GM12878 (cell line): ENCODE measurements at regions of chr16 and their contacts with region 1.

Region 1: DNA sequence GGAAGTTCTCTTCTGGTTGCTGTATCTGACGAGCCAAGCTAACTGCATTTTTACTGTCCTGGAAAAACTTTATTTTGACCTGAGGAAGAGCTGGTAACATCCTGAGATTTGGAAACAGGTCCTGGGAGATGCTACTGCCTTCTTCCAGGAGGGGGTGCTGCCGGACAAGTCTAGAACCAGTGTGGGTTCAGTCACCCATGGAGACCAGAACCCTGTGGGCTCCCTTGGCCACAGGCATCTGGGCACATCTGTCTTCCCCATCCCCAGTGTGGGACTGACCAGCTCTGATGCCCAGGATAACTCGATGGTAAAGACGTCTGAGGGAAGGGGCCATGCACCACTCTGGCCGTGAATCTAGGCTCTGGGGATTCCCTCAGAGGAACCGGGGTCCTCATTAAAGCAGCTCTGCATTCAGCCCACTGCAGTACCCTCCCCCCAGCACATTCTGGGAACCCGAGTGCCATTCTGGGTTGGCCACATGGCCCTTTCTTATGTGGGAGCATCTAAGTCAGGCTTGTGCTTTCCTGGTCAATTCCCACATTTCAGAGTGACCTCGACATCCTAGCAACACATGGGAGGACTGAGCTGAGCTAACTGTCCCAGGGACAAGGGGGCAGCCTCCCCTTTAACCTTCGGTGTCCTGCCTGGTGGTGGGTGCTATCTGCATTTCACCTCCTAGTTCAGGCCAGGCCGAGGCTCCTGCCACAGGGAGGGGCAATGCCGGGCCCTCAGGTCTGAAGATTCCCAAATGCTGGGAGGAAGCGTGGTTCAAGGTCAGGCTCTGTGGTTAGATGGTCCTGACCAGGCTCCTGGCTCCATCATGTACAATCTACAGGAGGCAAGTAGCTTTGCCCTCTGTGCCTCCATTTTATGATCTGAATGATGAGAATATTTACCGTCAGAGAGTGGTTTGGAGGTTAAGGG is 6.4 kb downstream of the C16orf86 start:
- DNase-seq: no peak
- ATAC-seq: peak; percentile 59
- H3K4me3 ChIP-seq: no peak overlapping the region
- H3K27ac ChIP-seq: no peak overlapping the region
- H3K4me1 ChIP-seq: peaks cover 24% of the 10 kb centered on the region
- H3K27me3 ChIP-seq: no peaks in the 10 kb centered on the region
- CTCF ChIP-seq: peak; percentile 83 to 94 (median 88)
- EP300 ChIP-seq: no peak
- POLR2A ChIP-seq: no peak
- RAD21 ChIP-seq: peak; percentile 94

Region 2: DNA sequence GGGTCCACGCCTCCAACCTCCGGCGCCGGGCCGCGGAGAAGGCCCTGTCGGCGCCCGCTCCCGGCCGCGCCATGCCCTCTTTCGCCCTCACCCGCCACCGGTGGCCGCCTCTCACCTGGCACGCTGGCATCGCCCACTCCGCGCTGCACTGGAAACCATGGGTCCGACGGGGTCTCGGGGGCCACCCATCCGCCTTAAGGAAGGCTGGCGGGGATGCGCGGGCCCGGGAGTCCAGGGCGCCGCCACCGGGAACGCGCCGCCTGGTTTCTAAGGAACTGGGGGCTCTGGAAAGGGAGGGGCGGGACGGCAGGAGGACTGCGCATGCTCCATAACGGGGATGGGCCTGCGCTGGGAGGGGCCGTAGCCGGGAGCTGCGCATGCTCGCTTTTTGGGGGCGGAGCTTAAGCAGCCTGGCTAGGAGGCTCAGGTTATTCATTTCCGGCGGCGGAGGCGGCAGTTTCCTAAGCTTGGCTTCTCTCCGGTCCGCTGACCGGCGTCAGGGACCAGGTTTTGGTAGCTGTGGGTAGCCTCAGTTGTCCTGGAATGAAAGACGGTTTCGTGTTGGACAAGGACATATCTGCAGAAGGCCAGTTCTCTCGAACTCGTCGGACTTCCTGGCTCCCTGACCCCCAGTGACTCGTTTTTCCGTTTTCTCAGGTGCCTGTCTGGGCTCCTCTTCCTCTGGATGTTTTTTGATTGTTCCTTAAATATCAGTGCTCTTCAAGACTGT is 46.2 kb after region 1 on chr16 and contains the start of gene GFOD2:
- CTCF ChIA-PET with region 1: interaction called, 27 read pairs
- POLR2A ChIA-PET with region 1: interaction called, 4 read pairs
- RAD21 ChIA-PET with region 1: interaction called, 5 read pairs
- SMC1A ChIA-PET with region 1: interaction called, 5 read pairs
- in situ Hi-C with region 1: no loop called
- intact Hi-C with region 1: loop called (anchors 5 kb)
- DNase-seq: peak; percentile 79
- ATAC-seq: peak; percentile 92
- H3K4me3 ChIP-seq: peak within 1 kb of the TSS; percentile 82
- H3K27ac ChIP-seq: peak within 1 kb of the TSS; percentile 95
- H3K4me1 ChIP-seq: peaks cover 11% of the 10 kb centered on the region
- H3K27me3 ChIP-seq: no peaks in the 10 kb centered on the region
- CTCF ChIP-seq: no peak
- EP300 ChIP-seq: no peak
- POLR2A ChIP-seq: peak; percentile 95
- RAD21 ChIP-seq: no peak
- polyA plus RNA-seq, gene GFOD2: 2.0 to 2.2 TPM

Region 3: DNA sequence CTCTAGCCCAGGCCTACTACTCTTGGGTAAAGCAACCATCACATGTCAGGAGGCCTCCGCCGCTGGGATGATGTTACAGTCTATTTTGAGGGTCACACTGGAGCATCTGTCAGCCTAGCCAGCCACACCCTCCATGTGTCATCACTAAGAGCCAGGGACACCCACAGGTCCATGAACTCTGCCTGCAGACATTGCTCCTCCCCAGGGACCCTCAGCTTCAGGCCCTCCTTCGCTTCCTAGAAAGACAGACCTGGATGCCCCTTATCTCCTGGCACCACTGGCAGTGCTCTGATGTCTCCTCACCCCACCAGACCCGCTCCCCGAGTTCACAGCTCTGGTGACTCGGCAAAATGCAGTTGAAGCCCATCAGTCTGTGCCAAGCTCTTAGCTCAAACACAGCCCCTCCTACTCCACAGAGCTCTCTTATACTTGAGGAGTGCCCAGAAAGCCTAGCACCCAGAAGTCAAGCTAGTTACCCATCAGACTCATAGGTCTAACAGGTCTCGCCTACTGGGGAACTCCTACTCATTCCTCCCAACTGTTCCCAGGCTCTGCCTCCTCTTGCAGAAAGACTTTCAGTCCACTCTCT is 127.4 kb after region 1 on chr16:
- CTCF ChIA-PET with region 1: interaction called, 19 read pairs
- POLR2A ChIA-PET with region 1: no interaction called
- RAD21 ChIA-PET with region 1: interaction called, 7 read pairs
- SMC1A ChIA-PET with region 1: interaction called, 8 read pairs
- in situ Hi-C with region 1: no loop called
- intact Hi-C with region 1: no loop called
- DNase-seq: no peak
- ATAC-seq: no peak
- H3K4me3 ChIP-seq: no peak overlapping the region
- H3K27ac ChIP-seq: no peak overlapping the region
- H3K4me1 ChIP-seq: peaks cover 26% of the 10 kb centered on the region
- H3K27me3 ChIP-seq: no peaks in the 10 kb centered on the region
- CTCF ChIP-seq: no peak
- EP300 ChIP-seq: no peak
- POLR2A ChIP-seq: no peak
- RAD21 ChIP-seq: no peak

Region 4: GRCh38 chr16:67806428-67807147 is 133.6 kb after region 1 on chr16 and contains the starts of genes RANBP10 and TSNAXIP1:
- CTCF ChIA-PET with region 1: interaction called, 19 read pairs
- POLR2A ChIA-PET with region 1: no interaction called
- RAD21 ChIA-PET with region 1: interaction called, 18 read pairs
- SMC1A ChIA-PET with region 1: interaction called, 8 read pairs
- in situ Hi-C with region 1: no loop called
- intact Hi-C with region 1: loop called (anchors 2 kb)
- DNase-seq: peak; percentile 99
- ATAC-seq: peak; percentile 93
- H3K4me3 ChIP-seq: peak within 1 kb of the TSS; percentile 94
- H3K27ac ChIP-seq: peak within 1 kb of the TSS; percentile 75
- H3K4me1 ChIP-seq: peaks cover 22% of the 10 kb centered on the region
- H3K27me3 ChIP-seq: no peaks in the 10 kb centered on the region
- CTCF ChIP-seq: no peak
- EP300 ChIP-seq: no peak
- POLR2A ChIP-seq: peak; percentile 92
- RAD21 ChIP-seq: no peak
- polyA plus RNA-seq, gene RANBP10: 1.2 to 2.0 TPM
- polyA plus RNA-seq, gene TSNAXIP1: 0.09 TPM in 1 of 2 experiments, not detected in the other

Region 5: GRCh38 chr16:67853670-67854069 is 180.7 kb after region 1 on chr16:
- CTCF ChIA-PET with region 1: no interaction called
- POLR2A ChIA-PET with region 1: no interaction called
- RAD21 ChIA-PET with region 1: no interaction called
- SMC1A ChIA-PET with region 1: no interaction called
- in situ Hi-C with region 1: no loop called
- intact Hi-C with region 1: no loop called
- DNase-seq: no peak
- ATAC-seq: no peak
- H3K4me3 ChIP-seq: no peak overlapping the region
- H3K27ac ChIP-seq: no peak overlapping the region
- H3K4me1 ChIP-seq: no peaks in the 10 kb centered on the region
- H3K27me3 ChIP-seq: no peaks in the 10 kb centered on the region
- CTCF ChIP-seq: no peak
- EP300 ChIP-seq: no peak
- POLR2A ChIP-seq: no peak
- RAD21 ChIP-seq: no peak

Region 6: GRCh38 chr16:67865316-67865715 is 192.3 kb after region 1 on chr16:
- CTCF ChIA-PET with region 1: interaction called, 11 read pairs
- POLR2A ChIA-PET with region 1: no interaction called
- RAD21 ChIA-PET with region 1: interaction called, 6 read pairs
- SMC1A ChIA-PET with region 1: interaction called, 4 read pairs
- in situ Hi-C with region 1: no loop called
- intact Hi-C with region 1: no loop called
- DNase-seq: no peak
- ATAC-seq: peak; percentile 92
- H3K4me3 ChIP-seq: no peak overlapping the region
- H3K27ac ChIP-seq: no peak overlapping the region
- H3K4me1 ChIP-seq: no peaks in the 10 kb centered on the region
- H3K27me3 ChIP-seq: no peaks in the 10 kb centered on the region
- CTCF ChIP-seq: peak; percentile 51 to 62 (median 56); a peak in 5 of 6 replicates
- EP300 ChIP-seq: no peak
- POLR2A ChIP-seq: no peak
- RAD21 ChIP-seq: peak; percentile 42; the same call in 1 of the 2 replicates

Region 7: DNA sequence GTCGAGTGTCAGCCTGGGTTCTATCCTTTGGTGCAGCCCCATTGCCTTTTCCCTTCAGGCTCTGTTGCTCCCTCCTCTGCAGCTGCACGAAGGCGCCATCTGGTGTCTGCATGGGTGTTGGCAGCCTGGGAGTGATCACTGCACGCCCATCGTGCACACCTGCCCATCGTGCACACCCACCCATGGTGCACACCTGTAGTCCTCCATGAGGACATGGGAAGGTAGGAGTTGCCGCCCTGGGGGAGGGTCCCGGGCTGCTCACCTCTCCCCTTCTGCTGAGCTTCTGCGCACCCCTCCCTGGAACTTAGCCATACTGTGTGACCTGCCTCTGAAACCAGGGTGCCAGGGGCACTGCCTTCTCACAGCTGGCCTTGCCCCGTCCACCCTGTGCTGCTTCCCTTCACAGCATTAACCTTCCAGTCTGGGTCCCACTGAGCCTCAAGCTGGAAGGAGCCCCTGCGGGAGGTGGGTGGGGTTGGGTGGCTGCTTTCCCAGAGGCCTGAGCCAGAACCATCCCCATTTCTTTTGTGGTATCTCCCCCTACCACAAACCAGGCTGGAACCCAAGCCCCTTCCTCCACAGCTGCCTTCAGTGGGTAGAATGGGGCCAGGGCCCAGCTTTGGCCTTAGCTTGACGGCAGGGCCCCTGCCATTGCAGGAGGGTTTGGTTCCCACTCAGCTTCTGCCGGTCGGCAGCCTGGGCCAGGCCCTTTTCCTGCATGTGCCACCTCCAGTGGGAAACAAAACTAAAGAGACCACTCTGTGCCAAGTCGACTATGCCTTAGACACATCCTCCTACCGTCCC is 255.8 kb after region 1 on chr16:
- CTCF ChIA-PET with region 1: interaction called, 18 read pairs
- POLR2A ChIA-PET with region 1: no interaction called
- RAD21 ChIA-PET with region 1: interaction called, 4 read pairs
- SMC1A ChIA-PET with region 1: interaction called, 3 read pairs
- in situ Hi-C with region 1: loop called (anchors 5 kb)
- intact Hi-C with region 1: loop called (anchors 2 kb)
- DNase-seq: no peak
- ATAC-seq: peak; percentile 94
- H3K4me3 ChIP-seq: no peak overlapping the region
- H3K27ac ChIP-seq: no peak overlapping the region
- H3K4me1 ChIP-seq: no peaks in the 10 kb centered on the region; the same call in 1 of the 2 replicates
- H3K27me3 ChIP-seq: no peaks in the 10 kb centered on the region
- CTCF ChIP-seq: peak; percentile 93 to 98 (median 96)
- EP300 ChIP-seq: no peak
- POLR2A ChIP-seq: peak; percentile 77
- RAD21 ChIP-seq: peak; percentile 88